Mucosa of descending colon (tissue), 3 donors: ENCODE measurements at regions of chr1 and their contacts with region 1.

Region 1: GRCh38 chr1:45569962-45570581 is 13.8 kb upstream of the NASP start:
- DNase-seq: peak in 2 of 3 donors; percentile 62 to 73
- ATAC-seq: peak; percentile 97
- H3K4me3 ChIP-seq: no peak overlapping the region
- H3K4me1 ChIP-seq: no peaks in the 10 kb centered on the region
- CTCF ChIP-seq: peak; percentile 90

Region 2: GRCh38 chr1:45359882-45360513 is 210.1 kb before region 1 on chr1:
- intact Hi-C with region 1: loop called (anchors 10 kb)
- DNase-seq: peak in 2 of 3 donors; percentile 61 to 90
- ATAC-seq: peak; percentile 67
- H3K4me3 ChIP-seq: no peak overlapping the region
- H3K4me1 ChIP-seq: peaks cover 18% of the 10 kb centered on the region
- CTCF ChIP-seq: peak; percentile 38

Region 3: GRCh38 chr1:45512641-45513054 is 57.4 kb before region 1 on chr1:
- intact Hi-C with region 1: loop called (anchors 5 kb)
- DNase-seq: peak in 2 of 3 donors; percentile 52 to 90
- ATAC-seq: peak; percentile 84
- H3K4me3 ChIP-seq: no peak overlapping the region
- H3K4me1 ChIP-seq: peaks cover 16% of the 10 kb centered on the region
- CTCF ChIP-seq: peak; percentile 59

Region 4: DNA sequence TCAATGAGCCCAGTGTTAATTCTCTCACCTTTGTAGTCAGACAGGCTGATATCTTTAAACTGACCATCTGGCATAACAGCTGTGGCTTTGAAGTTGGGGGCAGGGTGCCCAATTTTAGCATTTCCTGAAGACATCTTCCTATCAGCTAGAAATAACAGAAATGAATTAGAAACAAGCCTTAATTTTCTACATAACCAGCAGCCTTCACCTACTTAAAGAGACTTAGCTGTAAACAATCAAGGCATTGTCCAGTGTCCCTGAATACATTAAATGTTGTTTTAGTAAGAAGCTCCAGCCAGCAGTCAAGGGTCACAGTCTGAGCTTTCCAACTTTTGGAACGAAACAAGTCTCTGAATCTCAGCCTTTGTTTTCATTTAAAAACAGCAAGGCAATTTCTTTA is 51.2 kb before region 1 on chr1:
- intact Hi-C with region 1: loop called (anchors 5 kb)
- DNase-seq: peak in 1 of 3 donors; percentile 38
- ATAC-seq: no peak
- H3K4me3 ChIP-seq: no peak overlapping the region
- H3K4me1 ChIP-seq: peaks cover 30% of the 10 kb centered on the region
- CTCF ChIP-seq: no peak